ENCODE measurements at regions of chr14 and their contacts with region 1.

Region 1: GRCh38 chr14:53306267-53306721 is 153.2 kb upstream of the DDHD1 start:
- ATAC-seq: peak; percentile 50 to 76 (median 64)
- H3K4me3 ChIP-seq: peak overlapping the region in 3 of 5 donors; percentile 15 to 28 (median 27)
- H3K27ac ChIP-seq: peak overlapping the region in 1 of 2 donors; percentile 23
- H3K4me1 ChIP-seq: peaks cover 9 to 11% of the 10 kb centered on the region in 2 donors

Region 2: GRCh38 chr14:52835122-52835903 is 471.0 kb before region 1 on chr14:
- in situ Hi-C with region 1: loop called in 1 of 9 experiments (anchors 25 kb)
- ATAC-seq: peak in 6 of 8 experiments; percentile 40 to 100 (median 88)
- H3K4me3 ChIP-seq: no peak overlapping the region
- H3K27ac ChIP-seq: no peak overlapping the region
- H3K4me1 ChIP-seq: peaks cover 6 to 13% of the 10 kb centered on the region in 2 donors